ENCODE measurements at regions of chr19 and their contacts with region 1.

Region 1: GRCh38 chr19:19721896-19722295 is 11.0 kb downstream of the ZNF14 start:
- DNase-seq: no peak
- H3K4me3 ChIP-seq: no peak overlapping the region
- H3K4me3 Mint-ChIP-seq: no peak overlapping the region
- H3K27ac Mint-ChIP-seq: no peak overlapping the region
- H3K4me1 ChIP-seq: no peaks in the 10 kb centered on the region
- H3K4me1 Mint-ChIP-seq: no peaks in the 10 kb centered on the region
- H3K27me3 ChIP-seq: no peaks in the 10 kb centered on the region
- H3K27me3 Mint-ChIP-seq: no peaks in the 10 kb centered on the region
- CTCF ChIP-seq: no peak

Region 2: DNA sequence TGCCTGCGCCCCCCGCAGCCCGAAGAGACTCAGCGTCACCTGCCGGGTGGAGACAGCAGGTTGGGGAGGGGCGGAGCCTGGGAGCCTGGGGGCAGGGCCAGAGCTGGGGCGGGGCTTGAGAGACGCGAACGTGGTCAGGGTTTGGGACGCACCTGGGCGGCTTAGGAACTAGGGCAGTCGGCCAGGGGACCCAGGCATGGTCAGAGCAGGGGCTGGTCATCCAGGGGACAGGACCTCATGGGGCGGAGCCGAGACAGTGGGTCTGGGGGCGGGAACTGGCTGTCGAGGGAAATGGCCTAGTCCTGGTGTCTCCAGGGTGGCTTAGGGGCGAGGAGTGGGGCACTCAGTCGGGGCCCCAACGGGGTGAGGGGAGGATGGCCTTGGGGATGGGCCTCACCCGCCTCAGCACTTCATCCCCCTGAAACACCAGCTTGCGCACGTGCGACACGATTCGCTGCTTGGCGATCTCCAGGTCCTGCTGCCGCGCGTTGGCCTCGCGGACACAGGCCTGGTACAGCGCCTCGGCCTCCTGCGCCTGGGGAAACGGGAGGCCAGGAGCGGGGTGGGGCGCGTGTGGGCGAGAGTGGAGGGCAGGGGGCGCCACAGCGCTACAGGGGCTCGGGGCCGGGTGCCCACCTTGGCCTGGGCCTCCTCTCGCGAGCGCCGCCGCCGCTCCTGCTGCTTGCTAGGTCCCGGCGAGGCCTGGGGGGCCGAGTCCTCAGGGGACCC is 84.2 kb before region 1 on chr19:
- CTCF ChIA-PET with region 1: no interaction called
- POLR2A ChIA-PET with region 1: no interaction called
- intact Hi-C with region 1: no loop called
- DNase-seq: no peak
- H3K4me3 ChIP-seq: no peak overlapping the region
- H3K4me3 Mint-ChIP-seq: no peak overlapping the region
- H3K27ac Mint-ChIP-seq: no peak overlapping the region
- H3K4me1 ChIP-seq: 0 out of 2 replicates have a peak, but pooled peaks cover 3% of the 10 kb centered on the region
- H3K4me1 Mint-ChIP-seq: peaks cover 5% of the 10 kb centered on the region
- H3K27me3 ChIP-seq: no peaks in the 10 kb centered on the region
- H3K27me3 Mint-ChIP-seq: no peaks in the 10 kb centered on the region
- CTCF ChIP-seq: no peak

Region 3: GRCh38 chr19:19668230-19669012 is 53.5 kb before region 1 on chr19 and contains the start of gene ZNF101:
- CTCF ChIA-PET with region 1: no interaction called
- POLR2A ChIA-PET with region 1: no interaction called
- intact Hi-C with region 1: no loop called
- DNase-seq: peak; percentile 94 to 95
- H3K4me3 ChIP-seq: peak within 1 kb of the TSS; percentile 86
- H3K4me3 Mint-ChIP-seq: peak within 1 kb of the TSS; percentile 76
- H3K27ac Mint-ChIP-seq: peak within 1 kb of the TSS; percentile 88
- H3K4me1 ChIP-seq: peaks cover 9% of the 10 kb centered on the region
- H3K4me1 Mint-ChIP-seq: no peaks in the 10 kb centered on the region
- H3K27me3 ChIP-seq: no peaks in the 10 kb centered on the region
- H3K27me3 Mint-ChIP-seq: no peaks in the 10 kb centered on the region
- CTCF ChIP-seq: no peak
- total RNA-seq, gene ZNF101: 11.8 and 12.5 TPM in 2 replicates

Region 4: GRCh38 chr19:19849056-19849455 is 127.2 kb after region 1 on chr19:
- CTCF ChIA-PET with region 1: no interaction called
- POLR2A ChIA-PET with region 1: no interaction called
- intact Hi-C with region 1: loop called (anchors 2 kb)
- DNase-seq: no peak
- H3K4me3 ChIP-seq: no peak overlapping the region
- H3K4me3 Mint-ChIP-seq: no peak overlapping the region
- H3K27ac Mint-ChIP-seq: no peak overlapping the region
- H3K4me1 ChIP-seq: no peaks in the 10 kb centered on the region
- H3K4me1 Mint-ChIP-seq: no peaks in the 10 kb centered on the region
- H3K27me3 ChIP-seq: no peaks in the 10 kb centered on the region
- H3K27me3 Mint-ChIP-seq: no peaks in the 10 kb centered on the region
- CTCF ChIP-seq: no peak

Region 5: GRCh38 chr19:19943848-19944582 is 222.1 kb after region 1 on chr19:
- CTCF ChIA-PET with region 1: no interaction called
- POLR2A ChIA-PET with region 1: no interaction called
- intact Hi-C with region 1: no loop called
- DNase-seq: no peak
- H3K4me3 ChIP-seq: no peak overlapping the region
- H3K4me3 Mint-ChIP-seq: no peak overlapping the region
- H3K27ac Mint-ChIP-seq: no peak overlapping the region
- H3K4me1 ChIP-seq: no peaks in the 10 kb centered on the region
- H3K4me1 Mint-ChIP-seq: no peaks in the 10 kb centered on the region
- H3K27me3 ChIP-seq: no peaks in the 10 kb centered on the region
- H3K27me3 Mint-ChIP-seq: no peaks in the 10 kb centered on the region
- CTCF ChIP-seq: no peak

Measured in Caco-2 (cell line).